Ovary (tissue), 10 donors: ENCODE measurements at regions of chr14 and their contacts with region 1.

Region 1: DNA sequence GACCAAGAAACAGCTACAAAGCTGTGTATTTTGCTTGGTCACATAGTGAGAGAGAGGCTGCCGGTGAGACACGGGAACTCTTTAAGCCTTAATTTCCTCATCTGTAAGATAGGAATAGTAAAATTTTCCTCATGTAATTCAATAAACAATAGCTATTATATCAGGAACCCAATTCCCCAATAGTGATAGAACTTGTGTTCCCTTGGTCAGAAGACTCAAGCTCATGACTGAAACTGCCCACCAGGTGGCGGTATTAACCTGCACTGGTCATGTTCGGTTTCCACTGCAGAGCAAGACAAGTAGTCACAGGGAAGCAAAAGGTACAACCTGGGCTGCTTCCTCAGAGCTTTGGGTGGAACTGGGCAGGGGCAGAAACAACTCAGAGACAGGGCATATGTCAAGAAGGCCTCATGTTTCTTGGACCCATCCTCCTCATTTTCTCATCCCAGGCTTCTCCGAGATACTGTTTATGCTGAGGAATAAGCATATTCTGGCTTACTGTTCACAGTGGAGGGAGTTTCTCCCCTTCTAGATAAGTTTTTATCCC is 4.2 kb upstream of the AJUBA start:
- DNase-seq: peak; percentile 84 to 93 (median 89)
- H3K4me3 ChIP-seq: no peak overlapping the region
- H3K27ac ChIP-seq: no peak overlapping the region
- H3K4me1 ChIP-seq: no peaks in the 10 kb centered on the region
- H3K27me3 ChIP-seq: no peaks in the 10 kb centered on the region
- CTCF ChIP-seq: peak; percentile 82 to 90 (median 84)
- EP300 ChIP-seq: no peak
- POLR2A ChIP-seq: no peak

Region 2: DNA sequence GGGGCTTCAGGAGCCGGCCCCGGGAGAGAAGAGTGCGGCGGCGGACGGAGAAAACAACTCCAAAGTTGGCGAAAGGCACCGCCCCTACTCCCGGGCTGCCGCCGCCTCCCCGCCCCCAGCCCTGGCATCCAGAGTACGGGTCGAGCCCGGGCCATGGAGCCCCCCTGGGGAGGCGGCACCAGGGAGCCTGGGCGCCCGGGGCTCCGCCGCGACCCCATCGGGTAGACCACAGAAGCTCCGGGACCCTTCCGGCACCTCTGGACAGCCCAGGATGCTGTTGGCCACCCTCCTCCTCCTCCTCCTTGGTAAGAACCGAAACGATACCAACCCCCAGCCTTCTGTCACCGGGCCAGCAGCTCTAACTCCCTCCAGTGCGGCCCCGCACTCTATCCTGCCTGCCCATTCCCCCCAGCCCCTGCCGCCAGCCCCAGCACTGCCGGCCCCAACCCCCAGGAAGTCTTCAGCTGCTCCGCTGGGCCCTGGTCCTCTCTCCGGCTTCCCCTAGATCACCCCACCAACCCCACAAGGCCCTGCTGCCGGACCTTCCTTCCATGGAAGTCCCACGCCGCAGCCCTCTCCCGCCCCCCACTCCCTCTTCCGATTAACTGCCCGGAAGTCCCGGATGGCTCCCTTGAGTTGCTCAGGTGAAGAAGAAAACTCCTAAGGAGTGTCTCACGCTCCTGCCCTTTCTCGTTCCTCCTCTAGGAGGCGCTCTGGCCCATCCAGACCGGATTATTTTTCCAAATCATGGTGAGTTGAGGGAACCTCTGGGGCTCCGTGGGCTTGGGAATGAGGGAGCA is 114.3 kb before region 1 on chr14:
- intact Hi-C with region 1: loop called in 2 of 4 experiments (anchors 5 to 10 kb)
- DNase-seq: peak; percentile 84 to 92 (median 90)
- H3K4me3 ChIP-seq: peak overlapping the region; percentile 86
- H3K27ac ChIP-seq: peak overlapping the region; percentile 96 to 98
- H3K4me1 ChIP-seq: peaks cover 4% of the 10 kb centered on the region
- H3K27me3 ChIP-seq: no peaks in the 10 kb centered on the region
- CTCF ChIP-seq: peak; percentile 83 to 93 (median 93)
- EP300 ChIP-seq: no peak
- POLR2A ChIP-seq: peak; percentile 53

Region 3: DNA sequence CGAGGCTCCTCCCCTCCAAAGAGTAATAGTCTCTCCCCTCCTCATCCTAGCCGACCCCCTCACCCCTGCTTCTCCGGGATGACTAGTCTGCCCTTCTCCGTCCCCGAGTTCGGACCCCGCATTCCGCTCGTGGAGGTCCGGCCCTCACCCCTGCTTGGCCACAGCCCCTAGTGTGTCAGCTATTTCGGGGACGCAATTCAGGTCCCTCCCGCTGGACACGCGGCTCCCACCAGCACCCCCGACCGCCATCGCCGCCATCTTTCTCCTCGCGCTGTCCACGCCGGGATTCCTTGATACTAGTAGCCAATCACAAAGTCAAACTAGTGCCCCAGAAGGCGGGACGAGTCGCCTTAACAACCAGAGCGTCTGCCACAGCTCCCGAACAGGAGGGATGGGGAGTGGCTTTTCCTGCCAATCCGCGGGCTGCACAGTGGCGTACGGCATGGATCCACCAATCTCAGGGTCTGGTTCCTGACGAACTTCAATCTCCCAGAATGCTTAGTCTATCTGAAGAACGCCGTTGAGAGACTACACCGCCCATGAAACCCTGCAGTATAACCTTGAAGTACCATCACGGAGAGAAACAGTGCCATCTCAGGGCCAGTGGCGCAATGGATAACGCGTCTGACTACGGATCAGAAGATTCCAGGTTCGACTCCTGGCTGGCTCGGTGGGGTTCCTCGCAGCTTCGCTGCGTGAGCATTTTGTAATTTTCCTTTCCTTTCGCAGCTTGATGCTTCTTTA is 57.3 kb before region 1 on chr14 and contains the start of gene PRMT5:
- intact Hi-C with region 1: loop called in 2 of 4 experiments (anchors 2 to 5 kb)
- DNase-seq: peak; percentile 98 to 100 (median 99)
- H3K4me3 ChIP-seq: peak within 1 kb of the TSS; percentile 73
- H3K27ac ChIP-seq: peak within 1 kb of the TSS; percentile 77 to 92
- H3K4me1 ChIP-seq: peaks cover 3% of the 10 kb centered on the region
- H3K27me3 ChIP-seq: no peaks in the 10 kb centered on the region
- CTCF ChIP-seq: no peak
- EP300 ChIP-seq: no peak
- POLR2A ChIP-seq: peak; percentile 93
- total RNA-seq, gene PRMT5: 37.6 to 92.3 (median 65.4) TPM

Region 4: DNA sequence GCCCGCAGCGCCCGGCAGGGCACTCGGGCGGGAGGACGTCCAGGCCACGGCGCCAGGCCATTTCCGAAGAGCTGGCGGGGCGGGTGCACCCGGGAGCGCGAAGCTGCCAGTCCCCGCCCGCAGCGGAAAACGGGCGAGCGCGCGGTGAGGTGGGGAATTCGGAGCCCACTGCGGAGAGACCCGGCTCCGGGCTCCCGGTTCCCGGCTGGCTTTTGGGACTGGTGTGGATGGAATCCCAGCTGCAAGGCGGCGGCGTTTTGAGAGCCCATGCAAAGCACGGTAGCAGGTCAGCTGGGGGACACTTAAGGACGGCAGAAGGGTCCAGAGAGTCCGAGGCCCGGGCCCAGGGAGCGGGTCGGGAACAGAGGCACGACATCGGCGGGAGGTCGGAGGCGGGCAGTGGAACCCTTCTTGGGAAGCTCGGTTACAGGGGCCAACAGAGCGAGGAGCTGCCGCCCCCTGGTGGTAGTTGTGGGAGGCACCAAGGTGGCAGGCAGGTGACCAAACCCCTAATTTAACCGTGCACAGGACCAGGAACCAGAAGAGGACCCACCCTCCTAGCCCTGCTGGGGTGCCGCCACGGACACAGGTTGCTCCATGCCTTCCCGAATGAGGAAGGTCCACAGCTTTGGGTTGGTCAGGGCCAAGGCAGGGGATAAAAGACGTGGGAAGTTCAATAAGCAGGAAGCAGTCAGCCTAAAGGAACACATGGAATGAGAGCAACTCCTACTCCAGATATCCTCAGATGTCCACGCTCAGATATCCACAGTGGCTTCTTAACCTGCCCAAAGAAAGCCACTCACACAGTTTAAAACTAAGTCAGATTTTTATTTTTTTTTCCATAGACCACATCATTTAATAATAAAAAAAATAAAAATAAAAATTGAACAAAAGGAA is 71.4 kb after region 1 on chr14:
- intact Hi-C with region 1: loop called (anchors 2 to 5 kb)
- DNase-seq: peak; percentile 86 to 92 (median 90)
- H3K4me3 ChIP-seq: peak overlapping the region; percentile 54
- H3K27ac ChIP-seq: peak overlapping the region; percentile 10 to 45
- H3K4me1 ChIP-seq: no peaks in the 10 kb centered on the region
- H3K27me3 ChIP-seq: no peaks in the 10 kb centered on the region
- CTCF ChIP-seq: peak; percentile 86 to 95 (median 94)
- EP300 ChIP-seq: no peak
- POLR2A ChIP-seq: no peak